ENCODE measurements at regions of chrX and their contacts with region 1.

Region 1: GRCh38 chrX:134396174-134396573 is 63.8 kb upstream of the HPRT1 start:
- DNase-seq: no peak
- ATAC-seq: peak; percentile 56
- H3K4me3 ChIP-seq: no peak overlapping the region
- H3K27ac ChIP-seq: no peak overlapping the region
- H3K4me1 ChIP-seq: no peaks in the 10 kb centered on the region
- H3K27me3 ChIP-seq: no peaks in the 10 kb centered on the region
- CTCF ChIP-seq: peak; percentile 53 to 66 (median 65)
- EP300 ChIP-seq: no peak
- POLR2A ChIP-seq: no peak
- RAD21 ChIP-seq: peak; percentile 69

Region 2: GRCh38 chrX:133792198-133792953 is 603.8 kb before region 1 on chrX:
- CTCF ChIA-PET with region 1: interaction called, 17 read pairs
- POLR2A ChIA-PET with region 1: no interaction called
- RAD21 ChIA-PET with region 1: interaction called, 6 read pairs
- SMC1A ChIA-PET with region 1: no interaction called
- in situ Hi-C with region 1: no loop called
- intact Hi-C with region 1: no loop called
- DNase-seq: peak; percentile 15
- ATAC-seq: peak; percentile 94
- H3K4me3 ChIP-seq: no peak overlapping the region
- H3K27ac ChIP-seq: no peak overlapping the region
- H3K4me1 ChIP-seq: no peaks in the 10 kb centered on the region
- H3K27me3 ChIP-seq: no peaks in the 10 kb centered on the region
- CTCF ChIP-seq: peak; percentile 99; a peak in 5 of 6 replicates
- EP300 ChIP-seq: no peak
- POLR2A ChIP-seq: no peak
- RAD21 ChIP-seq: peak; percentile 90

Region 3: GRCh38 chrX:134246282-134246681 is 149.9 kb before region 1 on chrX:
- CTCF ChIA-PET with region 1: interaction called, 10 read pairs
- POLR2A ChIA-PET with region 1: no interaction called
- RAD21 ChIA-PET with region 1: interaction called, 8 read pairs
- SMC1A ChIA-PET with region 1: interaction called, 4 read pairs
- in situ Hi-C with region 1: no loop called
- intact Hi-C with region 1: loop called (anchors 5 kb)
- DNase-seq: no peak
- ATAC-seq: peak; percentile 63
- H3K4me3 ChIP-seq: no peak overlapping the region
- H3K27ac ChIP-seq: no peak overlapping the region
- H3K4me1 ChIP-seq: no peaks in the 10 kb centered on the region
- H3K27me3 ChIP-seq: no peaks in the 10 kb centered on the region; a peak in 1 of 4 replicates
- CTCF ChIP-seq: peak in 2 of 3 experiments; percentile 11 to 12; a peak in 1 of 6 replicates
- EP300 ChIP-seq: no peak
- POLR2A ChIP-seq: no peak
- RAD21 ChIP-seq: peak; percentile 40

Region 4: DNA sequence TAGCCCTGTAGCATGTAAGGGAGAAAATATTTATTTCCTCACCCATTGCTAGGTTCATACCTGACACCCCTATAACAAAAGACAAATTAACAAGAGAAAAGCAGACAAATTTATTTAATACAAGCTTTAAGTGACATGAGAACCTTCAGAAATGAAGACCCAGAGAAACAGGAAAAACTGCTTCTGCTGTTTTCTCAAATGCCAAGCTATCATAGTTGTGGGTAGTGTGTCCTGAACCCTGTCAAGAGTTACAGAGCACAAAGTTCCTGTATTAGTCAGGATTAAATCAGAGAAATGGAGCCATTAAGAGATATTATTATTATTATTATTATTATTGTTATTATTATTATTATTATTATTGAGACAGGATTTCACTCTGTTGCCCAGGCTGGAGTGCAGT is 141.7 kb before region 1 on chrX:
- CTCF ChIA-PET with region 1: interaction called, 17 read pairs
- POLR2A ChIA-PET with region 1: no interaction called
- RAD21 ChIA-PET with region 1: no interaction called
- SMC1A ChIA-PET with region 1: interaction called, 4 read pairs
- in situ Hi-C with region 1: no loop called
- intact Hi-C with region 1: loop called (anchors 5 kb)
- DNase-seq: no peak
- ATAC-seq: no peak
- H3K4me3 ChIP-seq: no peak overlapping the region
- H3K27ac ChIP-seq: no peak overlapping the region
- H3K4me1 ChIP-seq: no peaks in the 10 kb centered on the region
- H3K27me3 ChIP-seq: no peaks in the 10 kb centered on the region
- CTCF ChIP-seq: no peak
- EP300 ChIP-seq: no peak
- POLR2A ChIP-seq: no peak
- RAD21 ChIP-seq: no peak

Region 5: DNA sequence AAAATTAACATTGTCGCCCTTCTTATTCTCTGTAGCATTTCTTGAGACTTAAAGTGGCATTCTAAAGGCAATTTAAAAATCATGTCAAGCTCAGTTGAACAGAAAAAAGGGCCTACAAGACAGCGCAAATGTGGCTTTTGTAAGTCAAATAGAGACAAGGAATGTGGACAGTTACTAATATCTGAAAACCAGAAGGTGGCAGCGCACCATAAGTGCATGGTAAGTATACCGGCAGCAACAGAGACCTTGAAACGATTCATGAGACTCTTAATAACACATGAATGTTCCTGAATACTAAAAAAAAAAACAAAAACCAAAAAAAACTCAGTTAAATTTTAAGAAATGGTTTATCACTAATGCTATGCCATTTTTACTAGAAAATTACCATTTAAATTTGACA is 18.6 kb before region 1 on chrX:
- CTCF ChIA-PET with region 1: interaction called, 53 read pairs
- POLR2A ChIA-PET with region 1: no interaction called
- RAD21 ChIA-PET with region 1: interaction called, 8 read pairs
- SMC1A ChIA-PET with region 1: interaction called, 29 read pairs
- in situ Hi-C with region 1: no loop called
- intact Hi-C with region 1: loop called (anchors 2 kb)
- DNase-seq: no peak
- ATAC-seq: peak; percentile 55
- H3K4me3 ChIP-seq: no peak overlapping the region
- H3K27ac ChIP-seq: no peak overlapping the region
- H3K4me1 ChIP-seq: no peaks in the 10 kb centered on the region
- H3K27me3 ChIP-seq: no peaks in the 10 kb centered on the region
- CTCF ChIP-seq: peak; percentile 15 to 48 (median 33); a peak in 4 of 6 replicates
- EP300 ChIP-seq: no peak
- POLR2A ChIP-seq: no peak
- RAD21 ChIP-seq: peak; percentile 51

Region 6: DNA sequence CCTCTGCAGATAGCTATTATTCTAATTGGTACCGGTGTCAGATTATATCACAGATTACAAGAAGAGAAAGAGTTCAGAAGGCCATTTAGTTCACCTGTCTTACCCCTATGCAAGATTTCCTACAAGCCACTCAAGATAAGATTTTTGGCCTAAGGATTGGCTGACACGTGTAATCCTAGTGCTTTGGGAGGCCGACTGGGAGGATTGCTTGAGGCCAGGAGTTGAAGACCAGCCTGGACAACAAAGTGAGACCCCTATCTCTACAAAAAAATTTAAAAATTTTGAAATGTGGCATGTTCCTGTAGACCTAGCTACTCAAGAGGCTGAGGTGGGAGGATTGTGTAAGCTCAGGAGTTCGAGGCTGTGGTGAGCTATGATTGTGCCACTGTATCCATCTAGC is 13.4 kb before region 1 on chrX:
- CTCF ChIA-PET with region 1: interaction called, 53 read pairs
- POLR2A ChIA-PET with region 1: no interaction called
- RAD21 ChIA-PET with region 1: interaction called, 8 read pairs
- SMC1A ChIA-PET with region 1: interaction called, 29 read pairs
- in situ Hi-C with region 1: no loop called
- intact Hi-C with region 1: no loop called
- DNase-seq: no peak
- ATAC-seq: no peak
- H3K4me3 ChIP-seq: no peak overlapping the region
- H3K27ac ChIP-seq: no peak overlapping the region
- H3K4me1 ChIP-seq: no peaks in the 10 kb centered on the region
- H3K27me3 ChIP-seq: no peaks in the 10 kb centered on the region
- CTCF ChIP-seq: no peak
- EP300 ChIP-seq: no peak
- POLR2A ChIP-seq: no peak
- RAD21 ChIP-seq: no peak

Region 7: GRCh38 chrX:134406356-134407064 is 10.3 kb after region 1 on chrX:
- CTCF ChIA-PET with region 1: interaction called, 16 read pairs
- POLR2A ChIA-PET with region 1: interaction called, 5 read pairs
- RAD21 ChIA-PET with region 1: interaction called, 4 read pairs
- SMC1A ChIA-PET with region 1: interaction called, 5 read pairs
- in situ Hi-C with region 1: no loop called
- intact Hi-C with region 1: no loop called
- DNase-seq: no peak
- ATAC-seq: no peak
- H3K4me3 ChIP-seq: no peak overlapping the region
- H3K27ac ChIP-seq: no peak overlapping the region
- H3K4me1 ChIP-seq: no peaks in the 10 kb centered on the region
- H3K27me3 ChIP-seq: no peaks in the 10 kb centered on the region
- CTCF ChIP-seq: no peak
- EP300 ChIP-seq: no peak
- POLR2A ChIP-seq: no peak
- RAD21 ChIP-seq: no peak